ENCODE measurements at regions of chr1 and their contacts with region 1.

Region 1: GRCh38 chr1:236774926-236775325 is 20.2 kb upstream of the MTR start:
- DNase-seq: no peak
- ATAC-seq: peak; percentile 60

Region 2: GRCh38 chr1:236113324-236114032 is 661.4 kb before region 1 on chr1:
- intact Hi-C with region 1: loop called (anchors 10 kb)
- DNase-seq: no peak
- ATAC-seq: peak; percentile 67

Region 3: GRCh38 chr1:236603991-236604904 is 170.7 kb before region 1 on chr1 and contains the start of gene HEATR1:
- intact Hi-C with region 1: loop called (anchors 5 kb)
- DNase-seq: peak; percentile 95
- ATAC-seq: peak; percentile 97
- total RNA-seq, gene HEATR1: 9.6 TPM

Region 4: GRCh38 chr1:236705771-236706170 is 69.2 kb before region 1 on chr1:
- intact Hi-C with region 1: no loop called
- DNase-seq: no peak
- ATAC-seq: no peak

Region 5: DNA sequence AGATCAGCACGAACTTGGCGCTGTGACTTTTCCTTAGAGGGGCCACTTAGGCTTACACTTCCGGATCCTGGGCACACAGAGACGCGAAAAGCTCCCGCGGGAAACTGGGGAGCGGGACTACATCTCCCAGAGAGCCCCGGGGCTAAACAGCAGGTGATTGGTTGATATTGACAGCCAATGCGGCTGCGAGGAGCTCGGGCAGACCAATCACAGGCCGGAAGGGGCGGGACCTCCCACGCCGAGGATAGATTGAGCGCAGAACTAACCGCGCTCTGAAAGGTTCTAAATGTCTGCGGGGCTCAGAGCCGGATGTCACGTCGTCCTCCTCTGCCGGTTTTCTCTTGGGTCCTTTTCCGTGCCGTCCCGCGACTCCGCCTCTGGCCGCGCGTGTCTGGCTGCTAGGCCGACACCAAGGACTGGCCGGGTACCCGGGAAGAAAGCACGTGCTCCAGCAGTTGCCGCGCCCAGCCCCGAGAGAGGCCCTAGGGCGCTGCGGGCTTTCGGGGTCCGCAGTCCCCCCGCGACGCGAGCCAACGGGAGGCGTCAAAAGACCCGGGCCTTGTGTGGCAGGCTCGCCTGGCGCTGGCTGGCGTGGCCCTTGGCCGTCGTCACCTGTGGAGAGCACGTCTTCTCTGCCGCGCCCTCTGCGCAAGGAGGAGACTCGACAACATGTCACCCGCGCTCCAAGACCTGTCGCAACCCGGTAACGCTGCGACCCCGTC is 20.3 kb after region 1 on chr1 and contains the start of gene MTR:
- intact Hi-C with region 1: no loop called
- DNase-seq: peak; percentile 99
- ATAC-seq: peak; percentile 99
- total RNA-seq, gene MTR: 49.0 TPM